ENCODE measurements at regions of chr10 and their contacts with region 1.

Region 1: GRCh38 chr10:97278491-97278989 is 13.9 kb downstream of the ARHGAP19 start:
- DNase-seq: no peak
- ATAC-seq: peak; percentile 94 to 96
- H3K4me3 ChIP-seq: no peak overlapping the region
- H3K27ac ChIP-seq: peak overlapping the region; percentile 43 to 68 (median 52)
- H3K4me1 ChIP-seq: peaks cover 21% of the 10 kb centered on the region in 2 donors
- H3K27me3 ChIP-seq: no peaks in the 10 kb centered on the region
- CTCF ChIP-seq: peak; percentile 60 to 83 (median 71)
- POLR2A ChIP-seq: no peak

Region 2: DNA sequence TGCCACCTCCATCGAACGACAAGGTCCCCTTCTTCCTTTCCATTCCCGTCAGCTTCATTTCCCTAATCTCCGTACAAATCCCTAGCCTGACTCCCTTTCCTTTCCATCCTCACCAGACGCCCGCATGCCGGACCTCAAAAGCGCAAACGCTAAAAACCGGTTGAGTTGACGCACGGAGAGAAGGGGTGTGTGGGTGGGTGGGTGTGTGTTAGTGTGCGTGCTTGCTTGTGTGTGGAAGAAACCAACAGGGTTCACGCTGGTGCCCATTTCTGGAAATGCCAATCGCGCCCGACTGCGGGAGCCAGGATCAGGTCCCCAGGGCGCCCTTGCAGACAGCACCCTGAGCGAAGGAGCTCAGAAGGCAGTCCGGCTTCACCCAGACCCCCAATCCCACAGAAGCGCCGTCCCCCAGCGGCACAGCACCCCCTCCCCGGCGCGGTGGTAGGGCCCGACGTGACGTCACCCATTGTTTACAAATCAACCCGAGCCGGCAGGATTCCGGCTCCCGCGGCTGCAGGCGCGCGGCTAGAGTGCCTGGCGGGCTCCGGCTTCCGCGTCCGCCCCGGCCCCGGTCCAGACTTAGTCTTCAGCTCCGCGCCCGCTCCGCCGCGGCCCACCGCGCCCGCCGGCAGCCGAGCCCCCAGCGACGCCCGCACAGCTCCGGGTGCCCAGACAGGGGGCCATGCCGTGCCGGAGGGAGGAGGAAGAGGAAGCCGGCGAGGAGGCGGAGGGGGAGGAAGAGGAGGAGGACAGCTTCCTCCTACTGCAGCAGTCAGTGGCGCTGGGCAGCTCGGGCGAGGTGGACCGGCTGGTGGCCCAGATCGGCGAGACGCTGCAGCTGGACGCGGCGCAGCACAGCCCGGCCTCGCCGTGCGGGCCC is 40.5 kb after region 1 on chr10 and contains the start of gene FRAT1:
- in situ Hi-C with region 1: no loop called
- intact Hi-C with region 1: loop called (anchors 5 kb)
- DNase-seq: peak; percentile 76 to 80
- ATAC-seq: peak; percentile 91 to 94
- H3K4me3 ChIP-seq: peak within 1 kb of the TSS; percentile 74 to 88 (median 79)
- H3K27ac ChIP-seq: peak within 1 kb of the TSS; percentile 93 to 97 (median 96)
- H3K4me1 ChIP-seq: peaks cover 18 to 19% of the 10 kb centered on the region in 2 donors
- H3K27me3 ChIP-seq: no peaks in the 10 kb centered on the region
- CTCF ChIP-seq: no peak
- POLR2A ChIP-seq: peak; percentile 81 to 92
- total RNA-seq, gene FRAT1: 1.7 to 7.6 (median 3.2) TPM

Region 3: GRCh38 chr10:97327348-97328294 is 49.1 kb after region 1 on chr10:
- in situ Hi-C with region 1: loop called in 2 of 4 experiments (anchors 5 to 10 kb)
- intact Hi-C with region 1: loop called (anchors 2 kb)
- DNase-seq: no peak
- ATAC-seq: no peak
- H3K4me3 ChIP-seq: no peak overlapping the region
- H3K27ac ChIP-seq: no peak overlapping the region
- H3K4me1 ChIP-seq: peaks cover 16 to 18% of the 10 kb centered on the region in 2 donors
- H3K27me3 ChIP-seq: no peaks in the 10 kb centered on the region
- CTCF ChIP-seq: no peak
- POLR2A ChIP-seq: no peak

Region 4: DNA sequence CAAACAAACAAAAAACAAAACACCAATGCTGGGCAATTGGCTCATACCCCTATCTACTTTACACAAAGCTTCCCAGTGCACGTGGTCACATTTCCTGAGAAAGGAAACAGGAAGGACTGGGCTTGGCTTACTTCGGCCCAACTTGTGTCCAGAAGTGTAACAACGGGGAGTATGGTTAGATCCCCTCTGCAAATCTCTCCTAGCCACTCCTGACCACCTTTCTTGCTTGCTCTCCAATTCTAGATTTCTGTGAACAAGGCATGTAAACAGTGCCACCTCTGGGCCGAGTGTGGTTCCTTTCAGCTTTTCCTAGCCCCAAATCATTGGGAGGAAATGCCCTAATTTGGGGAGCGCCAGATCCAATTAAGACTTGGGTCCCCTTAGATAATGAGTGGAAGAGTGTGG is 77.0 kb after region 1 on chr10:
- in situ Hi-C with region 1: loop called in 1 of 4 experiments (anchors 10 kb)
- intact Hi-C with region 1: no loop called
- DNase-seq: no peak
- ATAC-seq: peak; percentile 31 to 66
- H3K4me3 ChIP-seq: no peak overlapping the region
- H3K27ac ChIP-seq: peak overlapping the region in 3 of 4 donors; percentile 21 to 27 (median 22)
- H3K4me1 ChIP-seq: peaks cover 2 to 8% of the 10 kb centered on the region in 2 donors
- H3K27me3 ChIP-seq: no peaks in the 10 kb centered on the region
- CTCF ChIP-seq: peak in 3 of 5 experiments; percentile 15 to 44 (median 41)
- POLR2A ChIP-seq: no peak

Measured in gastrocnemius medialis (tissue), 4 donors.